B cell (primary cell): ENCODE measurements at regions of chr9 and their contacts with region 1.

Region 1: GRCh38 chr9:74773886-74774479 is 113.7 kb downstream of the TRPM6 start:
- DNase-seq: peak; percentile 75
- ATAC-seq: peak; percentile 65
- H3K4me3 ChIP-seq: no peak overlapping the region
- H3K4me3 Mint-ChIP-seq: no peak overlapping the region
- H3K27ac ChIP-seq: no peak overlapping the region
- H3K27ac Mint-ChIP-seq: no peak overlapping the region
- H3K4me1 ChIP-seq: no peaks in the 10 kb centered on the region
- H3K4me1 Mint-ChIP-seq: no peaks in the 10 kb centered on the region
- H3K27me3 ChIP-seq: peaks cover 0 to 6% (median 2%) of the 10 kb centered on the region in 4 experiments
- H3K27me3 Mint-ChIP-seq: peaks cover 20% of the 10 kb centered on the region
- CTCF ChIP-seq: peak; percentile 97

Region 2: GRCh38 chr9:74952281-74953151 is 178.5 kb after region 1 on chr9 and contains the start of gene C9orf40:
- CTCF ChIA-PET with region 1: interaction called, 13 read pairs
- POLR2A ChIA-PET with region 1: no interaction called
- intact Hi-C with region 1: loop called (anchors 1 kb)
- DNase-seq: peak; percentile 93
- ATAC-seq: peak; percentile 89
- H3K4me3 ChIP-seq: peak within 1 kb of the TSS; percentile 65 to 91 (median 84)
- H3K4me3 Mint-ChIP-seq: peak within 1 kb of the TSS; percentile 95
- H3K27ac ChIP-seq: peak within 1 kb of the TSS; percentile 80 to 86
- H3K27ac Mint-ChIP-seq: peak within 1 kb of the TSS; percentile 95
- H3K4me1 ChIP-seq: peaks cover 9 to 15% of the 10 kb centered on the region in 2 donors
- H3K4me1 Mint-ChIP-seq: peaks cover 19% of the 10 kb centered on the region
- H3K27me3 ChIP-seq: no peaks in the 10 kb centered on the region
- H3K27me3 Mint-ChIP-seq: no peaks in the 10 kb centered on the region
- CTCF ChIP-seq: peak; percentile 78
- total RNA-seq, gene C9orf40: 5.0 and 5.8 TPM in 2 replicates

Region 3: DNA sequence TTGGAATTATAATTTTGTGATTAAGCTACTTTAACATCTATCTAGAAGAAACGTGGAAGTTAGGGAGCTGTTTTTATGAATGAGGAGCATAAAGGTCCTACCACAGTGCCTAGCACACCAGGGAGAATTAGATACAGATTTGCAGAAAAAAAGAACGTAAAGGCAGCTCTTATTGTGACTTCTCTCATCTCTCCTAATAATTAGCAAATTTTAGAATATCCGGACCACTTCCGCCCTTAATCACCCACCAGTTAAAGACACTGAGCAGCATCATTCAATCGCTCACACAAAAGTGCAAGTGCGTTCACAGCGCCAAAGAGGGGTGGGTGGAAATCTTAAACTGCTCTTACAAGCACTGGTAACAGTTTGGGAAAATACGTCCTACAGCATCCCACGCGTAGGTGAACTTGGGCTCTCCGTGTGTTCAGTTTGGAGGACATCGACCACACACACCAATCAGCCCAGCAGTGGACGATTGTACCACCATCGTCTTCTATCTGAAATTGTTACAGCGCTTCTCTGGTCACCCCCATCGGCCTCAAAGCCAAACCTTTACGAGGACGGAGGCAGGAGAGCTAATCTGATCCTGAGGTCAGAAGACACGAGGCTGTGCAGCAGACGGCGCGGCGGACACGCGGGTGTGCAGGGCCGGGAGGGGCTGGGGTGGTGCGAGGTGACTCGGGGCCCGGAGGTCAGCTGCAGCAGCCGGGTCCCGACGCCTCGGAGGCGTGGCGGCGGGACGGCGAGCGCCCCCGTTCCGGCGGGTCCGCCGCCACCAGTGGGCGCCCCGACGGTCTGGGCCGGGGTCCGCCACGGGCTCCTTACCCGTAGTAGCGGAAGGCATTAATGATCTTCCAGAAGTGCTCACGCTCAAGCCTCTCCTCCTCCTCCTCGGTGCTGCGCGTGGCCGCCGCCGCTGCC is 253.5 kb after region 1 on chr9:
- CTCF ChIA-PET with region 1: interaction called, 11 read pairs
- POLR2A ChIA-PET with region 1: no interaction called
- intact Hi-C with region 1: no loop called
- DNase-seq: no peak
- ATAC-seq: peak; percentile 28
- H3K4me3 ChIP-seq: peak overlapping the region; percentile 52 to 85 (median 71)
- H3K4me3 Mint-ChIP-seq: peak overlapping the region; percentile 99
- H3K27ac ChIP-seq: peak overlapping the region; percentile 53 to 85
- H3K27ac Mint-ChIP-seq: peak overlapping the region; percentile 98
- H3K4me1 ChIP-seq: peaks cover 17 to 19% of the 10 kb centered on the region in 2 donors
- H3K4me1 Mint-ChIP-seq: peaks cover 33% of the 10 kb centered on the region
- H3K27me3 ChIP-seq: no peaks in the 10 kb centered on the region
- H3K27me3 Mint-ChIP-seq: no peaks in the 10 kb centered on the region
- CTCF ChIP-seq: no peak

Region 4: GRCh38 chr9:75071530-75072124 is 297.6 kb after region 1 on chr9:
- CTCF ChIA-PET with region 1: interaction called, 226 read pairs
- POLR2A ChIA-PET with region 1: no interaction called
- intact Hi-C with region 1: no loop called
- DNase-seq: no peak
- ATAC-seq: peak; percentile 54
- H3K4me3 ChIP-seq: no peak overlapping the region
- H3K4me3 Mint-ChIP-seq: no peak overlapping the region
- H3K27ac ChIP-seq: no peak overlapping the region
- H3K27ac Mint-ChIP-seq: peak overlapping the region; percentile 28
- H3K4me1 ChIP-seq: peaks cover 3 to 6% of the 10 kb centered on the region in 2 donors
- H3K4me1 Mint-ChIP-seq: peaks cover 10% of the 10 kb centered on the region
- H3K27me3 ChIP-seq: no peaks in the 10 kb centered on the region
- H3K27me3 Mint-ChIP-seq: no peaks in the 10 kb centered on the region
- CTCF ChIP-seq: no peak

Region 5: DNA sequence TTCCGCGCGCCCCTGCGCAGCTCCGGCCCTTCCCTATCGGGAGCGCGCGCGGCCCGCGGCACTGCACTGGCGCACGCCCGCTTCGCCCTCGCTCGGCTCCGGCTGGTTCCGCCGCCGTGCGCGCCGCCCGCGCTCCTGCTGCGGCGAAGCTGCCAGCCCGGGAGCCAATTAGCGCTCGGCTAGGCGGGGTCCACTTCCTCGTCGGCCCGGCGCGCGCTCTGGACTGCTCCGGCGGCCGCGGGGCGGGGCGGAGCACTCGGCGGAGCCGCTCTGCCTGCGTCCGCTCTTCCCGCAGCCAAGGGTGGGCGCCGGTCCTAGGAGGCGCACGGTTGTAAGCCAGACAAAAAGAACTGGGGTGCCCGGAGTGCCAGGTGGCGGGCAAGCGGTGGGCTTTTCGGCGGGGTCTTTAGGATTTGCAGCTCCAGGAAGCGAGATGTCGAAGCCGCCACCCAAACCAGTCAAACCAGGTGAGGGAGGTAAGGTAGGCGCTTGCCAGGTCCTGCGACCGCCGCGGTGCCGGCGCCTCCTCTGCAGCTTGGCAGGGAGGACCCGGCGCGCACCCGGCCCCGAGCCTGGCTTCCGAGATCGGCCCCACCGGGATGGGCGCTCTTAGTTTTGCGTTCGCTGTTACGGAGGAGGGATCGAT is 314.4 kb after region 1 on chr9 and contains the start of gene OSTF1:
- CTCF ChIA-PET with region 1: interaction called, 45 read pairs
- POLR2A ChIA-PET with region 1: no interaction called
- intact Hi-C with region 1: no loop called
- DNase-seq: peak; percentile 96
- ATAC-seq: peak; percentile 86
- H3K4me3 ChIP-seq: peak within 1 kb of the TSS; percentile 88 to 99 (median 94)
- H3K4me3 Mint-ChIP-seq: peak within 1 kb of the TSS; percentile 95
- H3K27ac ChIP-seq: peak within 1 kb of the TSS; percentile 79 to 85
- H3K27ac Mint-ChIP-seq: peak within 1 kb of the TSS; percentile 94
- H3K4me1 ChIP-seq: peaks cover 57 to 58% of the 10 kb centered on the region in 2 donors
- H3K4me1 Mint-ChIP-seq: peaks cover 50% of the 10 kb centered on the region
- H3K27me3 ChIP-seq: no peaks in the 10 kb centered on the region
- H3K27me3 Mint-ChIP-seq: no peaks in the 10 kb centered on the region
- CTCF ChIP-seq: no peak
- total RNA-seq, gene OSTF1: 57.8 and 62.0 TPM in 2 replicates

Region 6: GRCh38 chr9:75448281-75448680 is 674.3 kb after region 1 on chr9:
- CTCF ChIA-PET with region 1: no interaction called
- POLR2A ChIA-PET with region 1: no interaction called
- intact Hi-C with region 1: no loop called
- DNase-seq: no peak
- ATAC-seq: no peak
- H3K4me3 ChIP-seq: no peak overlapping the region
- H3K4me3 Mint-ChIP-seq: no peak overlapping the region
- H3K27ac ChIP-seq: no peak overlapping the region
- H3K27ac Mint-ChIP-seq: no peak overlapping the region
- H3K4me1 ChIP-seq: no peaks in the 10 kb centered on the region
- H3K4me1 Mint-ChIP-seq: no peaks in the 10 kb centered on the region
- H3K27me3 ChIP-seq: no peaks in the 10 kb centered on the region
- H3K27me3 Mint-ChIP-seq: no peaks in the 10 kb centered on the region
- CTCF ChIP-seq: no peak